ENCODE measurements at regions of chr17 and their contacts with region 1.

Region 1: GRCh38 chr17:81253358-81254131 is 14.4 kb downstream of the NDUFAF8 start:
- DNase-seq: peak in 2 of 3 donors; percentile 64 to 65
- ATAC-seq: peak in 1 of 2 donors; percentile 35
- H3K4me3 ChIP-seq: no peak overlapping the region
- H3K27ac ChIP-seq: no peak overlapping the region
- H3K4me1 ChIP-seq: no peaks in the 10 kb centered on the region
- H3K27me3 ChIP-seq: no peaks in the 10 kb centered on the region

Region 2: GRCh38 chr17:81207610-81208581 is 45.6 kb before region 1 on chr17:
- intact Hi-C with region 1: no loop called
- DNase-seq: peak in 1 of 3 donors; percentile 35
- ATAC-seq: no peak
- H3K4me3 ChIP-seq: no peak overlapping the region
- H3K27ac ChIP-seq: no peak overlapping the region
- H3K4me1 ChIP-seq: no peaks in the 10 kb centered on the region
- H3K27me3 ChIP-seq: no peaks in the 10 kb centered on the region

Region 3: DNA sequence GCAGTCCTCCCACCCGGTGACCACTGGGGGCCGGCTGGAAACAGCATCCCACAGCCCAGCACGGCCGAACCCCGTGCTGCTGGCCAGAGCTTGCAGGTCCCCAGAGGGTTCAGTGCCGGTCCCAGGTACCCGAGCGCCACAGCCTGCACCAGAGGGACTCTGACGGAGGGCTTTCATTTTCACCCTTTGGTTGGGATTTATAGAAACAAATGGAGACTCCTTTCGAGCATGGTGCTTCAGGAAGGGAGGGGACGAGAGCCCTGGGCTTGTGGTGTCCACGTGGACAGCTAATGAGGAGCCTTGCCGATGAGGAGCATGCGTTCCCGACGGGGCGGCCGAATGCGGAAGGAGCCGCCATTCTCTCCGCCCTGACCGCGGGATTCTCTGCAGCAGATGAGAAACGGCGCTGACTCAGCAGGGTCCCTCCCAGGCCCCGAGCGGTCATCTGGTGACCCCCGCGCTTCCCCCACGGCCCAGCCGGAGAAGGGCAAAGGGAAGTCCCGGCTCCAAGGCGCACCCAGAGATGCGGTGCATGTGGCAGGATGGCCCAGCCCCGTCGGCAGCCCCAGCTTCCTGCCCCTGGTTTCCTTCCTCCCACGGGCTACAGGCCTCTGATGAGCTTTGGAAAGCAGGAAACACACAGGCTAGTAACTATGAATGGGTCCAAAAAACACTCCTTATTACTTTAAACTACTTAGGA is 31.8 kb after region 1 on chr17:
- intact Hi-C with region 1: no loop called
- DNase-seq: peak; percentile 87 to 94 (median 93)
- ATAC-seq: peak; percentile 85 to 93
- H3K4me3 ChIP-seq: peak overlapping the region; percentile 29
- H3K27ac ChIP-seq: peak overlapping the region; percentile 71
- H3K4me1 ChIP-seq: no peaks in the 10 kb centered on the region
- H3K27me3 ChIP-seq: no peaks in the 10 kb centered on the region

Region 4: GRCh38 chr17:81537343-81537855 is 283.9 kb after region 1 on chr17:
- intact Hi-C with region 1: loop called in 2 of 4 experiments (anchors 2 to 5 kb)
- DNase-seq: peak in 2 of 3 donors; percentile 79 to 80
- ATAC-seq: peak; percentile 37 to 60
- H3K4me3 ChIP-seq: no peak overlapping the region
- H3K27ac ChIP-seq: no peak overlapping the region
- H3K4me1 ChIP-seq: no peaks in the 10 kb centered on the region
- H3K27me3 ChIP-seq: no peaks in the 10 kb centered on the region

Region 5: DNA sequence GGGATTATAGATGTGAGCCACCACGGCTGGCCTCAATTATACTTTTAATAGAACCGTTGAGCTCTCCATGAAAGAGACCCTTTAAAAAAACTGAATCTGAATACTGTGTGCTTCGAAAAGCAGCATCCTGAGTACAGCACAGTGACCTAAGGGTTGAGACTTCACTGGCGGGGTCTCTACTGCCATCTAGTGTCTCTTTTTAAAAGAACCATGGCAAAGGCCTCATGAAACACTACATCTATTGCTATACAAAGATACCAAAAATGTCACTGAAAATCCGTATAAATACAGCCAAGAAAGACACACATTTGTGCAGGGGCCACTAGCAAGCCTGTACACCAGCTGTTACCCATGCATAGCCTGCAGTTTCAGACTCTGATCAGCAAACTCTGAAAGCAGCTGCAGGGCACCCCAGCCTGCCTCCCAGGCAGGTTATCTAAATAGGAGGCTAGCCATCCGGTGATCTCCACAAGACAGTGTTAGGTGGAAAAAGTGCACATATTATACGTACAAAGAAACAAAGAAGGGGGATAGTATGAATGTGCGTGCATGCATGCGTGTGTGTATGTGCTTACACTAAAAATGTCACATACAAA is 348.1 kb after region 1 on chr17:
- intact Hi-C with region 1: loop called in 3 of 4 experiments (anchors 10 kb)
- DNase-seq: peak in 1 of 3 donors; percentile 2
- ATAC-seq: peak; percentile 78 to 83
- H3K4me3 ChIP-seq: no peak overlapping the region
- H3K27ac ChIP-seq: no peak overlapping the region
- H3K4me1 ChIP-seq: no peaks in the 10 kb centered on the region
- H3K27me3 ChIP-seq: no peaks in the 10 kb centered on the region

Measured in right cardiac atrium (tissue), 5 donors.